H1 (cell line): ENCODE measurements at regions of chr16 and their contacts with region 1.

Region 1: GRCh38 chr16:52697971-52698370 is 151.0 kb upstream of the TOX3 start:
- DNase-seq: no peak
- H3K4me3 ChIP-seq: no peak overlapping the region
- H3K27ac ChIP-seq: no peak overlapping the region
- H3K4me1 ChIP-seq: no peaks in the 10 kb centered on the region
- H3K27me3 ChIP-seq: no peaks in the 10 kb centered on the region; a peak in 1 of 7 replicates
- CTCF ChIP-seq: no peak
- EP300 ChIP-seq: no peak
- POLR2A ChIP-seq: no peak
- RAD21 ChIP-seq: no peak

Region 2: GRCh38 chr16:52709306-52709705 is 11.3 kb after region 1 on chr16:
- CTCF ChIA-PET with region 1: interaction called, 11 read pairs
- POLR2A ChIA-PET with region 1: interaction called, 3 read pairs
- DNase-seq: no peak
- H3K4me3 ChIP-seq: no peak overlapping the region
- H3K27ac ChIP-seq: no peak overlapping the region
- H3K4me1 ChIP-seq: 0 out of 7 replicates have a peak, but pooled peaks cover 0 to 2% (median 0%) of the 10 kb centered on the region in 4 experiments
- H3K27me3 ChIP-seq: no peaks in the 10 kb centered on the region
- CTCF ChIP-seq: peak; percentile 27 to 38 (median 29)
- EP300 ChIP-seq: no peak
- POLR2A ChIP-seq: no peak
- RAD21 ChIP-seq: peak; percentile 25 to 63; a peak in 3 of 4 replicates